ENCODE measurements at regions of chr4 and their contacts with region 1.

Region 1: DNA sequence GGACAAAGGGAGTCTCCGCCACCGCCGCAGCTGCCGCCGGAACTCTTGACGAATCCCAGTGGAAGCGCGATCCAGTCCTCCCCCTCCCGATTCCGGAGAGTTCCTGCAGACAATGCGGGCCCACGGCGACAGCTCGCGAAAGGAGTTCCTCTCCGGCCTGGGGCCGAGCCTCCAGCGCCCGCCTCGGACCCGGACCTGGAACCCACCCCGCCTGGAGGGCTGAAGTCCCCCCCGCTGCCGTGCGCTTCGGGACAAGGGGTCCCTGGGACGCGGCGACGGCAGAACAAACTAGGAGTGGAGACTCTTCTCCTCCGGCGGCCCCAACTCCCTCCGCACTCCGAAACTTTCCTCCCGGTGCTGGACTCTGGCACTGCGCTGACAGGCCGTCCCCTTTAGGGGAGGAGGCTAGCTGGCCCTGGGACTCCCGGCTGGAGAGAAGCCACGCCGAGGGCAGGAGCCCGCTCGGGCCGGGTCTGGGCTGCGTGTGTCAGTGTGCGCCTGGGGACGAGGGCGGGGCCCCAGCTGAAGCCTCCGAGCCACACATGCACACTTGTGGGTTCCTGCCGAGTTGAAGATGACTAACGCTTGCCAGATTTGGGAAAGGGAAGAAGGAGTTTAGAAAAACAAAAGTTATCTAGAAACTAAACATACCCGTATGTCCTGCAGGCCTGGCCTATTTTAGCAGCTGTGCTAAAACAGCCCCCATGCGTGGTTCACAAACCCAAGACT is at the start of gene ANTXR2:
- DNase-seq: peak; percentile 93
- H3K4me3 Mint-ChIP-seq: peak within 1 kb of the TSS; percentile 97
- H3K27ac Mint-ChIP-seq: peak within 1 kb of the TSS; percentile 95
- H3K4me1 Mint-ChIP-seq: peaks cover 68% of the 10 kb centered on the region
- H3K27me3 Mint-ChIP-seq: peaks cover 2% of the 10 kb centered on the region
- total RNA-seq, gene ANTXR2: 8.2 and 10.6 TPM in 2 replicates

Region 2: GRCh38 chr4:78775303-78776030 is 1297.4 kb before region 1 on chr4:
- intact Hi-C with region 1: loop called (anchors 10 kb)
- DNase-seq: peak; percentile 97
- H3K4me3 Mint-ChIP-seq: peak overlapping the region; percentile 93
- H3K27ac Mint-ChIP-seq: peak overlapping the region; percentile 98
- H3K4me1 Mint-ChIP-seq: peaks cover 34% of the 10 kb centered on the region
- H3K27me3 Mint-ChIP-seq: no peaks in the 10 kb centered on the region

Region 3: GRCh38 chr4:80007745-80008149 is 65.2 kb before region 1 on chr4:
- intact Hi-C with region 1: loop called (anchors 1 kb)
- DNase-seq: no peak
- H3K4me3 Mint-ChIP-seq: peak overlapping the region; percentile 51
- H3K27ac Mint-ChIP-seq: peak overlapping the region; percentile 85
- H3K4me1 Mint-ChIP-seq: peaks cover 53% of the 10 kb centered on the region
- H3K27me3 Mint-ChIP-seq: no peaks in the 10 kb centered on the region

Region 4: GRCh38 chr4:80058740-80059139 is 14.2 kb before region 1 on chr4:
- intact Hi-C with region 1: loop called (anchors 1 kb)
- DNase-seq: peak; percentile 87
- H3K4me3 Mint-ChIP-seq: peak overlapping the region; percentile 81
- H3K27ac Mint-ChIP-seq: peak overlapping the region; percentile 97
- H3K4me1 Mint-ChIP-seq: peaks cover 36% of the 10 kb centered on the region
- H3K27me3 Mint-ChIP-seq: no peaks in the 10 kb centered on the region

Region 5: DNA sequence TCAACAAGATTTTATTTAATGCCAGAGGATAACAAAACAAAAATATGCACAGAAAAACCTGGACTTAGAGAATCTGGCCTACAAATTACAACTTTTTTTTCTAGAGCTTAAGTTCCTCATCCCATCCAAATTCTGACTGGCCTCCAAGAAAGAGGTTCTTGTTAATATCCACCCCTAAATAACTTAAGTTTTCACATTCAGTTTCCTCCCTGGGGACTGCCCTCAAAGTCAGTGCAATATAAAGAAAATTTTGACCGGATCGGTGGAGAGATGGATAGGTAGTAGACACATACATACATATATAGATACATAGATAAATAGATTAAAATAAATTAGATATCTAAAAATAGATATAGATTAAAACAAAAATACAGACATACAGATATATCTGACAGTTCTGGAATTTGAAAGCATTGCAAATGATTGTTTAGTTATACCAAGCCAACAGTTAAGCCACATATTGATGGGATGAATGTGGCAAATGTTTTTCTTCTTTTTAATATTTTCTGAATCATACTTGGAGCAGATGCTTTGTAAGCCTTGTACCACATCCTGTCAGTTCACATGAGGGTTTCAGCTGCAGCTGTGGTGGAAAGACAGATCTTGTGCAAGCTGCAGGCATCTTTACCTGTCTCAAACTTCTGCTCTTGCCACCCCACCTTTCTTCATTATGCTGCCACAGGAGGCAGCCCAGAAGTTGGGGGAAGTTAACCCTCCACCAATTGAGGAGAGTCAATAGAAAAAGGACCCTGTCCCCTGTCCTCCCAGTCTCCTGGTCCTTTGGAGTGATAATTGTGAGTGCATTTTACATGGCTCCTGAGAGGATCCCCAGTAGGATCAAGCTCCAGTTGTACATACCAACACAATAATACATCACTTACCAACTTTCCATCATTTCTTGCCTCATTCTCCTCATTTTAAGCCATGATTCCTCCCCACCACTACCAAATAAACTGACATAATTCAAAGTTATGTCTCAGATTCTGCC is 65.9 kb after region 1 on chr4:
- intact Hi-C with region 1: loop called (anchors 2 kb)
- DNase-seq: peak; percentile 88
- H3K4me3 Mint-ChIP-seq: peak overlapping the region; percentile 56
- H3K27ac Mint-ChIP-seq: peak overlapping the region; percentile 80
- H3K4me1 Mint-ChIP-seq: peaks cover 59% of the 10 kb centered on the region
- H3K27me3 Mint-ChIP-seq: no peaks in the 10 kb centered on the region

Region 6: GRCh38 chr4:80202190-80202711 is 129.3 kb after region 1 on chr4:
- intact Hi-C with region 1: loop called (anchors 2 kb)
- DNase-seq: peak; percentile 95
- H3K4me3 Mint-ChIP-seq: peak overlapping the region; percentile 77
- H3K27ac Mint-ChIP-seq: peak overlapping the region; percentile 71
- H3K4me1 Mint-ChIP-seq: peaks cover 23% of the 10 kb centered on the region
- H3K27me3 Mint-ChIP-seq: peaks cover 40% of the 10 kb centered on the region

Region 7: DNA sequence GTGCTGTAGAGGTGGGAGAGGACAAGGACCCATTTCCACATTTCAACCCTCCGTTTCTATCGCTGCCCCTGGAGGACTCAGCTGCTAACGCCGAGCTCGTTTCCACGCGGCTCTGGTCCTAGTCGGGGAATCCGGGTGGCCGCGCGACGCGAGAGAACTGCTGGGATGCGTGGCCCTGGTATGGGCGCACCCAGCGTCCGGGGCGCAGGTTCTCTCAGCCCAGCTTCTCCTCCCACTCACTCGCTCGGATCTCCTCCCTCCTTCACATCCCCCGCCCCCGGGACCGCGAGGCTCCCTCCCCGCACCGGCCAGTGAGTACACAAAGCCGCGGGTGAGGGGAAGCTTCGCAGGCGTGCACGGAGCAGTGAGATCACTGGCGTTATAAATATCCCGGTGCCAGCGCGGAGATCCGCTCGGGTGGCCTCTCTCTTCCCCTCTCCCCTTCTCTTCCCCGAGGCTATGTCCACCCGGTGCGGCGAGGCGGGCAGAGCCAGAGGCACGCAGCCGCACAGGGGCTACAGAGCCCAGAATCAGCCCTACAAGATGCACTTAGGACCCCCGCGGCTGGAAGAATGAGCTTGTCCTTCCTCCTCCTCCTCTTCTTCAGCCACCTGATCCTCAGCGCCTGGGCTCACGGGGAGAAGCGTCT is 193.5 kb after region 1 on chr4 and contains the start of gene FGF5:
- intact Hi-C with region 1: no loop called
- DNase-seq: peak; percentile 63
- H3K4me3 Mint-ChIP-seq: peak within 1 kb of the TSS; percentile 73
- H3K27ac Mint-ChIP-seq: peak within 1 kb of the TSS; percentile 21
- H3K4me1 Mint-ChIP-seq: peaks cover 12% of the 10 kb centered on the region
- H3K27me3 Mint-ChIP-seq: peaks cover 85% of the 10 kb centered on the region
- total RNA-seq, gene FGF5: not detected in 2 replicates

Region 8: DNA sequence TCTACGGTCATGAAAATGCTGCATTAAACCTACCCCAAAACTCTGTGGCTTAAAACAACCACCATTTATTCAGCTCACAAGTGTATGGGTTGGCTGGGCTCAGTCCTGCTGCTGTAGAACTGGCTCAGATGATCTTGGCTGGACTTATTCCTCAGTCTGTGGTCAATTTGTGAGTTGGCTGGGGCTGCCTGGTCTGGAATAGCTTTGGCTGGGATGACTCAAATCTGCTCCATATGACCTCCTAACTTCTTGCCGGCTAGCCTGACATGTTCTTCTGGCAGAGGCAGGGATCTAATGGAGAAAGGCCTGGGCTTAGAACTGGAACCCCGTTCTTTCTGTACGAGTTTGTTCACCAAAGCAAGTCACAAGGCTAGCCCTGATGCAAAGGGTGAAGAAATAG is 334.3 kb after region 1 on chr4:
- intact Hi-C with region 1: no loop called
- DNase-seq: no peak
- H3K4me3 Mint-ChIP-seq: no peak overlapping the region
- H3K27ac Mint-ChIP-seq: no peak overlapping the region
- H3K4me1 Mint-ChIP-seq: no peaks in the 10 kb centered on the region
- H3K27me3 Mint-ChIP-seq: peaks cover 2% of the 10 kb centered on the region